B cell (primary cell): ENCODE measurements at regions of chr2 and their contacts with region 1.

Region 1: DNA sequence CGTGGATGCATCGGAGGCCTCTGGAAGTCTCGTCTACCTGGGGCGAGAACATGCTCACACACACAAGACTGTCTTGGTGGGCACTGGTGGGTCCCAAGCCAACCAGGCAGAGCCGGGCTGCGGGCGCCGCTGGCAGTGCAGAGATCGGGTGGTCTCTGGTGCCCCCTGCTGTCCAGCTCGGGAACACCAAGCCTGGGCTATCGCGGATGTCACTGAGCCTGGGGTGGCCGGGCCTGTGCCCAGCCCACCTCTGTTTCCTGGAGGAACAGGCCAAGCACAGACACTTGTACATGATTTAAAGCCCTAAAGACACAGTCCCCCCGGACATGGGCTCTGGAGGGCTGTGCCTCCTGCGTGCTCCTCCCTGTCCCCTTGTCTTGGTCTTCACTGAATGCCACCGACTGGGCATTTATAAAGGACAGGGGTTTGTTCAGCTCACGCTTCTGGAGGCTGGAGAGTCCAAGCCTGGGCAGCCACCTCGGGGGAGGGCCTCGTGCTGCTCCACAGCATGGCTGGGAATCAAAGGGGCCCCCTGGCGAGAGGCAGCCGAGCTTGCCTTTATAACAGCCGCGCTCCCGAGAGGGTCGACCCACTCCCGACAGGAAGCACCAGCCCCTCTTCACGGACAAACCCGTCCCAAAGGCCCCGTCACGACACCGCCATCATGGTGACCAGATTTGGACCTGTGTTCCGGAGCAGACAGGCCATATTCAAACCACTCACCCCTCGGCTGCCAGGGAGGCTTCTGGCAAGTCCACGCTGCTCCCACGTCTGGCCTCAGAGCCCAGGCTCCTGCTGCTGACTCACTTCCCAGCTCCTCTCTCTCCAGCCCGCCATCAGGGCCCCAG is 3.6 kb upstream of the OTOS start:
- DNase-seq: peak; percentile 81
- ATAC-seq: peak; percentile 97
- H3K4me3 ChIP-seq: no peak overlapping the region
- H3K4me3 Mint-ChIP-seq: no peak overlapping the region
- H3K27ac ChIP-seq: no peak overlapping the region
- H3K27ac Mint-ChIP-seq: no peak overlapping the region
- H3K4me1 ChIP-seq: peaks cover 3 to 7% of the 10 kb centered on the region in 2 donors
- H3K4me1 Mint-ChIP-seq: peaks cover 2% of the 10 kb centered on the region
- H3K27me3 ChIP-seq: peaks cover 0 to 15% (median 5%) of the 10 kb centered on the region in 4 experiments
- H3K27me3 Mint-ChIP-seq: peaks cover 15% of the 10 kb centered on the region
- CTCF ChIP-seq: peak; percentile 92

Region 2: GRCh38 chr2:238784671-238785527 is 1359.1 kb before region 1 on chr2:
- CTCF ChIA-PET with region 1: no interaction called
- POLR2A ChIA-PET with region 1: no interaction called
- intact Hi-C with region 1: loop called (anchors 5 kb)
- DNase-seq: peak; percentile 53
- ATAC-seq: no peak
- H3K4me3 ChIP-seq: no peak overlapping the region
- H3K4me3 Mint-ChIP-seq: no peak overlapping the region
- H3K27ac ChIP-seq: no peak overlapping the region
- H3K27ac Mint-ChIP-seq: no peak overlapping the region
- H3K4me1 ChIP-seq: no peaks in the 10 kb centered on the region
- H3K4me1 Mint-ChIP-seq: no peaks in the 10 kb centered on the region
- H3K27me3 ChIP-seq: no peaks in the 10 kb centered on the region
- H3K27me3 Mint-ChIP-seq: peaks cover 8% of the 10 kb centered on the region
- CTCF ChIP-seq: peak; percentile 84

Region 3: DNA sequence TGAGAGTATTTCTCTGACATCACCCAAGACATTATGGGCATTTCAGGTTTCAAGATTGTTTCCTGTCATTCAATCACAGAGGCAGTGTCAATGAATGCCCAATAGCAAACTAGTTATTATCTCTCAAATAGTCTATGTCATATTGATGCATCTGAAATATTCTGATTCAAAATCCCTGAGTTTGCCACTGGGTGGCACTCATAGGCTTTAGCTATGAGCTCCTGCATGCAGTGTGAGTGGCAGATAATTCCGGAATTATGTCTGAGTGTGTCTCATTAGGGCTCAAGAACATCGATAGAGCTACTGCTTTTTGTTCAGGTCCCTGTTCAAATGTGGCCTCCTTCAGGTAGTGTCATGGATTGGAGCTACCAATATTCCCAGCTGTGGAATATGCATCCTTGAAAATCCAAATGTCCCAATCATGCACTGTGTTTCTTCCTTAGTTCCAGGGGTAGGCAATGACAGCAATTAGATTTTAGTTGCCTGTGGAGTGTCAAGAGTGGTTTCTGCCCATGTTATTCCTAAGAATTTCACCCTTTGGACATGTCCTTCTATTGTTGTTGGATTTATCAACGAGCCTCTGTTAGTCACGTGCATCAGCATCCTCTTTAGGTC is 82.9 kb before region 1 on chr2:
- CTCF ChIA-PET with region 1: interaction called, 136 read pairs
- POLR2A ChIA-PET with region 1: no interaction called
- intact Hi-C with region 1: no loop called
- DNase-seq: peak; percentile 60
- ATAC-seq: peak; percentile 51
- H3K4me3 ChIP-seq: no peak overlapping the region
- H3K4me3 Mint-ChIP-seq: no peak overlapping the region
- H3K27ac ChIP-seq: no peak overlapping the region
- H3K27ac Mint-ChIP-seq: no peak overlapping the region
- H3K4me1 ChIP-seq: no peaks in the 10 kb centered on the region
- H3K4me1 Mint-ChIP-seq: no peaks in the 10 kb centered on the region
- H3K27me3 ChIP-seq: peaks cover 0 to 6% (median 0%) of the 10 kb centered on the region in 4 experiments
- H3K27me3 Mint-ChIP-seq: peaks cover 21% of the 10 kb centered on the region
- CTCF ChIP-seq: peak; percentile 68

Region 4: DNA sequence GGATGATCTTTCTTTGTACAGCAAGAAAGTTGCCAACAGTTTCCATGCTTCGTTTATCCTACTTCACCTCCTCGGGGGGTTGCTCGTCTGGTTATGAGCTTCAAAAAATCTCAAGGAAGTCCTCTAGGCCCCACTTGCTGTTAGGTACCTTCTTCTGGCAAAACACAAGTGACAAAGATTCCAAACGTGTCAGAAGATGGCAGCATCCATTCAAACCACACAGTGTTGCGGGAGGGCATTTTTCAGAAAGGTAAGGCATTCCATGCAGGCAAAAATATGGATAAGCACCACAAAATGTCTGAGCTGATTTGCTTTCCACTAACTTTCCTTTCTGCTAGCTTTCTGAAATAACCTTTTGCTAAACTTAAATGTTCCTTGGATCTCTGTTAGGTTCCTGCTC is 77.5 kb before region 1 on chr2:
- CTCF ChIA-PET with region 1: interaction called, 136 read pairs
- POLR2A ChIA-PET with region 1: no interaction called
- intact Hi-C with region 1: no loop called
- DNase-seq: no peak
- ATAC-seq: no peak
- H3K4me3 ChIP-seq: no peak overlapping the region
- H3K4me3 Mint-ChIP-seq: no peak overlapping the region
- H3K27ac ChIP-seq: no peak overlapping the region
- H3K27ac Mint-ChIP-seq: no peak overlapping the region
- H3K4me1 ChIP-seq: no peaks in the 10 kb centered on the region
- H3K4me1 Mint-ChIP-seq: no peaks in the 10 kb centered on the region
- H3K27me3 ChIP-seq: peaks cover 0 to 9% (median 4%) of the 10 kb centered on the region in 4 experiments
- H3K27me3 Mint-ChIP-seq: peaks cover 32% of the 10 kb centered on the region
- CTCF ChIP-seq: no peak

Region 5: GRCh38 chr2:240128608-240129145 is 15.3 kb before region 1 on chr2:
- CTCF ChIA-PET with region 1: interaction called, 10 read pairs
- POLR2A ChIA-PET with region 1: no interaction called
- intact Hi-C with region 1: no loop called
- DNase-seq: no peak
- ATAC-seq: no peak
- H3K4me3 ChIP-seq: no peak overlapping the region
- H3K4me3 Mint-ChIP-seq: no peak overlapping the region
- H3K27ac ChIP-seq: no peak overlapping the region
- H3K27ac Mint-ChIP-seq: no peak overlapping the region
- H3K4me1 ChIP-seq: no peaks in the 10 kb centered on the region
- H3K4me1 Mint-ChIP-seq: peaks cover 2% of the 10 kb centered on the region
- H3K27me3 ChIP-seq: no peaks in the 10 kb centered on the region
- H3K27me3 Mint-ChIP-seq: no peaks in the 10 kb centered on the region
- CTCF ChIP-seq: no peak

Region 6: GRCh38 chr2:240154606-240155005 is 10.6 kb after region 1 on chr2:
- CTCF ChIA-PET with region 1: interaction called, 13 read pairs
- POLR2A ChIA-PET with region 1: no interaction called
- intact Hi-C with region 1: no loop called
- DNase-seq: no peak
- ATAC-seq: no peak
- H3K4me3 ChIP-seq: no peak overlapping the region
- H3K4me3 Mint-ChIP-seq: no peak overlapping the region
- H3K27ac ChIP-seq: no peak overlapping the region
- H3K27ac Mint-ChIP-seq: no peak overlapping the region
- H3K4me1 ChIP-seq: no peaks in the 10 kb centered on the region
- H3K4me1 Mint-ChIP-seq: no peaks in the 10 kb centered on the region
- H3K27me3 ChIP-seq: peaks cover 0 to 7% (median 0%) of the 10 kb centered on the region in 4 experiments
- H3K27me3 Mint-ChIP-seq: peaks cover 11% of the 10 kb centered on the region
- CTCF ChIP-seq: no peak